ENCODE measurements at regions of chr2 and their contacts with region 1.

Region 1: DNA sequence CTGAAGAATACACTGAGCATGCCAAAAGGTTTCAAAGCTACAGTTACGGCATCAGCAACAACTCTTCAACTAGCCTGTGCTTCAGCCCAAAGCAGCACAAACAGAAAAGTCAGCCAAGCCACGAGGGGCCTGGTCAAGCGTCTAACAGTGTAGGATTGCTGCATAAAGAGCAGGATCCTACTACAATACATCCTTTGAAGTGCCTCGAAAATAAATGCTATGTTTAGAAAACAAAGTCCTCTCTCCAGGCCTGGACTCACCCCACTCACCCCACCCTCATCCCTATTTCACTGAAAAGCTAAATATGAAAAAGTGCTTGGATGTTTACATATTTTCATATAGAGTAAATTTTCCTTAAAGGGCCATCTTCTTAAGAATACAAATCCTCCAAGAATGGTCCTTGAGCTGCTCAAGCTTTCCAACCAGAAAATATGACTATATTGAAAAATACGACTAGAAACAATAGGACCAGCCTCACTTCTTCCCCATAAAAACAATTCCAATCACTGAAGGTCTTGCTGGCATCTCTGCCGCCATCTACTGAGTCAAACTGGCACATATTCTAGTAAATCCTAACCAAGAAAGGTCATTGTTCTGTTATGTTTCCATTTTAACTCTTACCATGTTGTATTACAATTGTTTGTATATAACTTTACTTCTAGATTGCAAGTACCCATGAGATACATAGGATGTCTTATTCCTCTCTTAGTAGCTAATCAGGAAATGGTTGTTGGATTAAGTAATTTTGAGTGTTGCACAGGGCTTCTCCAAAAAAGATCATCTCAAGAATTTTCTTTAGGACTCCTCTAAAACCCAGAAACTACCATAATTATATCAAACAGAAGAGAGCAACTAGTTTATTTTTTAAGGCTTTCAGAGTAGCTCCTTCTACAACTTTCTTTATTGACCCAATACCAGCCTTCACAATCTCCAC is 63.6 kb downstream of the CLHC1 start:
- DNase-seq: peak in 2 of 4 experiments; percentile 53 to 67
- ATAC-seq: peak; percentile 63
- H3K4me3 ChIP-seq: no peak overlapping the region
- H3K27ac ChIP-seq: no peak overlapping the region; the same call in 2 of the 3 replicates
- H3K4me1 ChIP-seq: peaks cover 4 to 19% of the 10 kb centered on the region in 2 experiments; a peak in 3 of 5 replicates
- H3K27me3 ChIP-seq: no peaks in the 10 kb centered on the region
- CTCF ChIP-seq: peak; percentile 65 to 84 (median 65)
- EP300 ChIP-seq: no peak
- POLR2A ChIP-seq: no peak
- RAD21 ChIP-seq: peak; percentile 92 to 94

Region 2: GRCh38 chr2:54899576-54900200 is 268.8 kb before region 1 on chr2:
- CTCF ChIA-PET with region 1: interaction called, 17 read pairs
- POLR2A ChIA-PET with region 1: no interaction called
- in situ Hi-C with region 1: loop called (anchors 10 kb)
- intact Hi-C with region 1: loop called (anchors 1 kb)
- DNase-seq: peak in 2 of 4 experiments; percentile 38 to 63
- ATAC-seq: peak; percentile 87
- H3K4me3 ChIP-seq: no peak overlapping the region
- H3K27ac ChIP-seq: no peak overlapping the region
- H3K4me1 ChIP-seq: peaks cover 0 to 8% of the 10 kb centered on the region in 2 experiments; a peak in 3 of 5 replicates
- H3K27me3 ChIP-seq: peaks cover 0 to 16% of the 10 kb centered on the region in 2 experiments; a peak in 3 of 5 replicates
- CTCF ChIP-seq: peak; percentile 55 to 85 (median 68); a peak in 5 of 6 replicates
- EP300 ChIP-seq: no peak
- POLR2A ChIP-seq: no peak
- RAD21 ChIP-seq: peak; percentile 92 to 94

Region 3: DNA sequence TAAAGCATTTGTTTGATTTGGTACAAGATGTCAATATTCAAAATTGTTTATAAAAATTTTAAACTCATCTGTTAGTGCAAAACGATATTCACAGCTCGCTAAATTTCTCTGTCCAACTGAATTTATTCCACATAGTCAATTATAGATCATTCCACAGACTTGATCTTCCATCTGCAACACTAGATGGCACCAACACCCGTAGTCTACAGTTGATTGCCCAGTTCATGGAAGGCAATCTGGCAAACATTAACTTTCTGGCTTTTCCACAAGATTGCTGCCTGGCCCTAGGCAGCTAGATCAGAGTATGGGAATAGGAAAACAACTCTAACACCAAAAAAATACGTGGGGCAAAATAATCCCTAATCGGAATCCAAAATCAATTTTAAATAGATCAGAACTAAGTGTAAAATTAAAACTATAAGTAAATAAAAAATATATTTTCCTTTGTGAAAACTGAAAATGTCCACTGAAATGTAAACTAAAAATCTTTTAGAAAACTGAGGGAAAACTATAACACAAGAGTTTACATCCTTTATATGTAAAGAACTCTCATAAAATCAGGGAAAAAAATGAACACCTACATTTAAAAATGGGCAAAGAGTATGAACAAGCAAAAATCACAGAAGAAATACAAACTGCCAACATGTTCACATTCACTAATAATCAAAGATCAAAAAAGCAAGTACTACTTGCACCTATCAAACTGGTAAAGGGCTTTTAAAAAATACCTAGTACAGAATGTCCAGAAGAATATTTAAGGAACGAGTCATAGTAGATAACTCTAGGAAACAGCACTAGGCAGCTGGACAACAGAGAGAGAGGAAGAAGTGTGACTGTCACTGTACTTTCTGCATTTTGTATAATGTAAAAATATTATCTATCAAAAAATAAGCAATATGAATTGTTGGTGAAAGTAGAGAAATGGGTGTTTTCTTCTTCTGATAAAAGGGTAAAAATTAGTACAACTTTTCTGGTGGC is 153.2 kb before region 1 on chr2:
- CTCF ChIA-PET with region 1: interaction called, 3 read pairs
- POLR2A ChIA-PET with region 1: interaction called, 6 read pairs
- in situ Hi-C with region 1: no loop called
- intact Hi-C with region 1: loop called (anchors 1 kb)
- DNase-seq: peak in 3 of 4 experiments; percentile 22 to 61 (median 32)
- ATAC-seq: peak; percentile 64
- H3K4me3 ChIP-seq: no peak overlapping the region
- H3K27ac ChIP-seq: no peak overlapping the region
- H3K4me1 ChIP-seq: peaks cover 0 to 26% of the 10 kb centered on the region in 2 experiments; a peak in 4 of 5 replicates
- H3K27me3 ChIP-seq: no peaks in the 10 kb centered on the region
- CTCF ChIP-seq: peak; percentile 48 to 62 (median 50)
- EP300 ChIP-seq: no peak
- POLR2A ChIP-seq: no peak
- RAD21 ChIP-seq: peak in 1 of 2 experiments; percentile 58; a peak in 3 of 4 replicates

Region 4: DNA sequence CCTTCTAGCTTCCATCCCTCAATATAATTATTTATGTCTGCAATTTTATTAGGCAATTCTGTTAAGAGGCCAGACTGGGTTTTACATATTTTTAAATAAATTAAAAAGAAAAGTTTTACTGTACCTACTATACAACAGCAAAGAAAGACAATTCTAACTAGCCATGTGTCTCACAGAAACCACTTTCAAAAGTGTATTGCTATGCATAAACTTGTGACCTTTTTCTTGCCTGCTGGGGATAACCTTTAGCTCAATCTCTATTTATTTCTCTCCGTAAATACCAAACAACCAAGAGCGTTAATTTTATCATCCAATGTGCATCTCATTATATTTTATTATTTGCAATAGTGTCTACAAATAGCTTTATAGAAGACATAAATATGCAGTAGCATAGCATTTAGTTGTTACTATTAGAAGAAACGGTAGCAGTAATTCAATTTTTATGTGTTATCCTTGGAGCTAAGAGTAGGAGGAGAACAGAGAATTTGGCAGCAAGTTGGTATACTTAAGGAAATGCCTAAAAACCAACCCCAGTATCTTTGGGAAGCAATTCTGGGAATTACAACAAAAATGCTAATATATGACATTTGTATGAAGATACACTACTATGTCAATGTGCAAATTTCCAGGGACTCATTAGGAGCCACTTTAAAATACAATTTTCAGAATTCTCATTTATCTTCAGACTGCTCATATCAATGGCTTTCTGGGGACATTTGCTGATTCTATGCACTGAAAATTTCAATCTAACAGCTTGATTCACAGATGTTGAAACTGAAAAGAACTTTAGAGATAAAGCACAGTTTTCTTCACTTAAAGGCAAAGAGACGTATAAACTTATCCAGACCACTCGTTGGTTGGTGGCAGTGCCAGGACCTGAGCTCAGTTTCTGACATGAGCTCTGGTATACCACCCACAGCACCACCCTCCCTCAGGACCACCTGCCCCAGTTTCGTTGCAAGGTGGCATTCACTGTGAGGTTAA is 95.2 kb before region 1 on chr2:
- CTCF ChIA-PET with region 1: no interaction called
- POLR2A ChIA-PET with region 1: interaction called, 3 read pairs
- in situ Hi-C with region 1: no loop called
- intact Hi-C with region 1: loop called (anchors 1 kb)
- DNase-seq: no peak
- ATAC-seq: no peak
- H3K4me3 ChIP-seq: no peak overlapping the region
- H3K27ac ChIP-seq: no peak overlapping the region
- H3K4me1 ChIP-seq: peaks cover 0 to 3% of the 10 kb centered on the region in 2 experiments; a peak in 1 of 5 replicates
- H3K27me3 ChIP-seq: no peaks in the 10 kb centered on the region
- CTCF ChIP-seq: no peak
- EP300 ChIP-seq: no peak
- POLR2A ChIP-seq: no peak
- RAD21 ChIP-seq: no peak

Region 5: DNA sequence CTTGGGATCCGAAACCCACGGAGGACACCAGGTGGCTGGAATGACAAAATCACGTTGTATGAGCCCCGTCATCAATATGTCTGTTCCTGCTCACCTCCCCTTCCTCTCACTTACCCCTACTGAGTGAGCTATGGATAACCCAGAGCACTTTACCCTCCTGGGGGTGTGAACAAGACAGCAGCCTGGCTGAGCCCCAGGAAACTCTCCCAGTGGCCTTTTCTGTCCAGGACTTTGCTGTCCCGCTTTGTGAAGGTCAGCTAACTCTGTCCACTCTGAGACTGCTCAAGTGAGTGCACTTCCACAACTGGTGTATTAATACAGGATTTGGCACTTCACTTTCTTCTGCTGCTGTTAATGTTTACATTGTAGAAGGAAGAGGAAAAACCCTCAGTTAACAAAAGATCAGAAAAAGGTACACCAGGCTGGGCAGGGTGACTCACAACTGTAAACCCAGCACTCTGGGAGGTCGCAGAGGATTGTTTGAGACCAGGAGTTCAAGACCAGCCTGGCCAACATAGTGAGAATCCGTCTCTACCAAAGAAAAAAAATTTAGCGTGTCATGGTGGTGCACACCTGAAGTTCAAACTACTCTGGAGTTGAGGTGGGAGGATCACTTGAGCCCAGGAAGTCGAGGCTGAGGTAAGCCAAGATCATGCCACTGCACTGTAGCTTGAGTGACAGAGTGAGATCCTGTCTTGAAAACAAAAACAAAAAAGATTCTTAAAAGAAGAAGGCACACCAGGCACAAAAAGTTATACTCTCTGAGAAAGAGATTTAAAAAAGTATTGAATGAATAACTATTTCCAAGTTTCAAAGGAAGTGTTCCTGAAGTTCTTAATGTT is 26.7 kb before region 1 on chr2:
- CTCF ChIA-PET with region 1: no interaction called
- POLR2A ChIA-PET with region 1: interaction called, 5 read pairs
- in situ Hi-C with region 1: no loop called
- intact Hi-C with region 1: loop called (anchors 2 kb)
- DNase-seq: peak in 2 of 4 experiments; percentile 28 to 47
- ATAC-seq: peak; percentile 8
- H3K4me3 ChIP-seq: no peak overlapping the region
- H3K27ac ChIP-seq: peak overlapping the region; percentile 96
- H3K4me1 ChIP-seq: peaks cover 38 to 61% of the 10 kb centered on the region in 2 experiments
- H3K27me3 ChIP-seq: no peaks in the 10 kb centered on the region
- CTCF ChIP-seq: no peak
- EP300 ChIP-seq: no peak
- POLR2A ChIP-seq: no peak
- RAD21 ChIP-seq: 0 out of 4 replicates have a peak, but pooled peaks of 1 of the 2 experiments have one; percentile 15

Measured in K562 (cell line).